ENCODE measurements at regions of chr20 and their contacts with region 1.

Region 1: DNA sequence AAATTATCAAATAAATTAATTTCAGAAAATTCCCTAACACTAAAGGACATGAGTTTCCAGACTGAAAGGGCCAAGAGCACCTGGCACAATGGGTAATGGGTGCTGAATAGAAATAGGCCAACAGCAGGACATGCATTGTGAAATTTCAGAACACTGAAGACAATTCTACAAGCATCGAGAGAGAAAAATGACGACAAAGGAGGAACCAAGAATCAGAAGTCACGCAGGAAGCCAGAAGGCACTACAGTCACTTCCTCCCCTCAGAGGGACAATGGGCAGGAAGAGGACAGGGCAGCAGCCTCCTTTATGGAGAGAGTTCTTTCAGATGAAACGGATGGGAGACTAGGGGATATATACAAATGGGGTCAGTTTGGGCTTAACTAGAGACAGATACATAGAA is 29.6 kb downstream of the PCNA start:
- H3K4me3 ChIP-seq: no peak overlapping the region
- H3K27ac ChIP-seq: no peak overlapping the region
- H3K4me1 ChIP-seq: peaks cover 2% of the 10 kb centered on the region; the same call in 1 of the 2 replicates
- CTCF ChIP-seq: no peak

Region 2: DNA sequence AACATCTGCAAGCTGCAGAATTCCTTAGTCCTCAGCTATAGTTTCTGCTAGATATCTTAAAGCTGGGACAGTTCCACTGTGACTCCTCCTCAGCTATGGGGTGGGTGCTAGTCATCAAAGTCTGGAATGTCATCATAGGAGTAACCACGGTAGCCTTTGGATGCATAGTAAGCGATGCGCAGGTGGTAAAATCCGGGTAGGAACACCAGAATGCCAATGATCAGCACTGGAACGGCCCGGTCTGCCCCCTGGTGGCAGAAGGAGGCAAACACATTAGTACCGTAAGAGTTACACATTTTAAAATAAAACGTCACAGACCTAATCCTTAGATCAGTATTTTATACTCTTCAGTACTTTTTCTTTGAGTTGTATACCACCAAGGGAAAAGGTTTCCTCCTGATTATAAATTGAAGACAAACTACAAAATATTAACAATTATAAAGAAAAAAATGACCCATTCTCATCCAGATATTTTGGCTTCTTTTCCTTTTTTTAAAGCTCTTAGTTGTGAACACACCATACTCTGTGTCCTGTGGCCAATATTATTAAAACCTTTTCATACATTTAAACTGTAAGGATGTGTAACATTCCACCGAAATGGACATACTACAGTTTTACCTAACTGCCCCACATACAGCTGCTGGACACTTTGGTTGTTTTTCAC is 10.6 kb after region 1 on chr20:
- CTCF ChIA-PET with region 1: interaction called, 21 read pairs
- POLR2A ChIA-PET with region 1: interaction called, 4 read pairs
- H3K4me3 ChIP-seq: no peak overlapping the region
- H3K27ac ChIP-seq: no peak overlapping the region
- H3K4me1 ChIP-seq: no peaks in the 10 kb centered on the region
- CTCF ChIP-seq: peak; percentile 54

Measured in HEK293 (cell line).